ENCODE measurements at regions of chr4 and their contacts with region 1.

Region 1: DNA sequence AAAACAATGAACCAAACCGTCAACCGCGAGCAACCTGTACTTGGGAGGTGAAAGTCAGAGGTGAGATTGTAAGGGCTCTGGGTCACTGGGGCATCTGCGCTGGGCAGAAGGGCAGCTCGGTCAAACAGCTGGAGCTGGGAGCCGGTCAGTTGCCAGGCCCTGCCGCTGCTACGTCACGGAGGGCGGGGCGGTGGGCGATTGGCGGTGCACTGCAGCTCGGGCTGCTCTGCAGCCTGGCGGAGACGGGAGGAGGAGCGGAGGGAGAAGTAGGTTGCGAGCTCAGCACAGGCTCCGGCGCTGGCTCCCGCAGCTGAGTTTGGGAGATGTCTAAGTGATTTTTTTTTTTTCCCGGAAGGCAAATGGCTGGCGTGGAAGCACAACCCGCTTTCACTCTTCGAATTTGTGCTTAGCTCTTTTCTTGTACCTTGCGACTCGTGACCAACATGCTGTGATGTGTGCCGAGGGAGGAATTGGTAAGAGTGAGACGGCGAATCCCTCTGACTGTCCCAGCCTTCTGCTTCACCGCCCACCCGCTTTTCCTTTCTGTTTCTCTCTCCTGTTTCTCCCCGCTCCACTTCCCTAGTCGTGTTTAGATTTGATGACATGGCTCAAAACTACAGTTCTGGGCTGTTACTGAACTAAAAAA is at the start of gene ATP10D:
- DNase-seq: peak; percentile 78 to 85
- ATAC-seq: peak; percentile 92 to 98 (median 95)
- H3K4me3 ChIP-seq: peak within 1 kb of the TSS; percentile 83
- H3K4me3 Mint-ChIP-seq: peak within 1 kb of the TSS; percentile 96
- H3K27ac ChIP-seq: peak within 1 kb of the TSS; percentile 79
- H3K27ac Mint-ChIP-seq: peak within 1 kb of the TSS; percentile 91 to 92
- H3K4me1 ChIP-seq: peaks cover 4% of the 10 kb centered on the region
- H3K4me1 Mint-ChIP-seq: peaks cover 31 to 36% of the 10 kb centered on the region in 2 donors
- H3K27me3 ChIP-seq: no peaks in the 10 kb centered on the region
- H3K27me3 Mint-ChIP-seq: no peaks in the 10 kb centered on the region
- CTCF ChIP-seq: no peak
- total RNA-seq, gene ATP10D: 19.8 to 79.3 (median 28.0) TPM

Region 2: DNA sequence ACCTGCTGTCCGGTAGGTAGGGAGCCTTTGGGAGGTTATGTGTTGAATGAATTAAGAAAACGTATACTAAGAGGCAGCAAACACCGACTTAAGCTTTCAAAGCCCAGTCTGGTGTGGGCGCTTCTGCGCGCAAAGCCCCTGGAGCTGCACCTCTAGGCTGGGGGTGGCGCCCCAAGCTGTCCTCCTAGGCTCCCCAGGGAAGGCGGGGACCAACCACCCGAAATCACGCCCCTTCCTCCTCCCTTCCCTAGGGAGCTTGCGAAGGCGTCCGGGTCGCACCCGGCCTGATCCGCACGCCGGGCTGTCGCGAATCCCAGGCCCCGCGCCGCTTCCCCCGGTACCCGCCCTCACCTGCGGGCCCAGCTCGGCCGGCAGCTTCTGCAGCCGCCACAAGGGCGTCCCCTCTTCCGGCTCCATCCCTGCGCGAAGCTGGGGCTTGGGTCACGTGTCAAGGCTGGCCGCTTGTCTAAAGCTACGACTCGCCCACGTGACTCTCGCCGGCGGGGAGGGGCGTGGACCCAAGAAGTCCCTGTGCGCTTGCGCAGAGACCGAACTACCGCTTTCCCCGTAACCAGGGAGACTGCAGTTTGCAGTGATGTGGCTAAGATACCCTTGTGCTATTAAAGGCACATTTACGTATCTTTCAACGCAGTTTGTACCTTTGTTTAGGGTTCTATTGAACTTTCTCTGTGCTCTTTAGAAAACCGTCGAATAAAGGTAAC is 21.8 kb before region 1 on chr4 and contains the start of gene COMMD8:
- intact Hi-C with region 1: loop called (anchors 1 kb)
- DNase-seq: peak; percentile 96 to 99
- ATAC-seq: peak; percentile 95 to 97 (median 95)
- H3K4me3 ChIP-seq: peak within 1 kb of the TSS; percentile 73
- H3K4me3 Mint-ChIP-seq: peak within 1 kb of the TSS; percentile 63
- H3K27ac ChIP-seq: peak within 1 kb of the TSS; percentile 80
- H3K27ac Mint-ChIP-seq: peak within 1 kb of the TSS; percentile 86 to 92
- H3K4me1 ChIP-seq: peaks cover 9% of the 10 kb centered on the region
- H3K4me1 Mint-ChIP-seq: peaks cover 21 to 40% of the 10 kb centered on the region in 2 donors
- H3K27me3 ChIP-seq: no peaks in the 10 kb centered on the region
- H3K27me3 Mint-ChIP-seq: no peaks in the 10 kb centered on the region
- CTCF ChIP-seq: peak; percentile 22
- total RNA-seq, gene COMMD8: 12.3 to 19.6 (median 13.1) TPM

Region 3: GRCh38 chr4:47474799-47475198 is 10.4 kb before region 1 on chr4:
- intact Hi-C with region 1: no loop called
- DNase-seq: no peak
- ATAC-seq: peak in 1 of 3 donors; percentile 79
- H3K4me3 ChIP-seq: no peak overlapping the region
- H3K4me3 Mint-ChIP-seq: no peak overlapping the region
- H3K27ac ChIP-seq: no peak overlapping the region
- H3K27ac Mint-ChIP-seq: no peak overlapping the region
- H3K4me1 ChIP-seq: no peaks in the 10 kb centered on the region
- H3K4me1 Mint-ChIP-seq: no peaks in the 10 kb centered on the region
- H3K27me3 ChIP-seq: no peaks in the 10 kb centered on the region
- H3K27me3 Mint-ChIP-seq: peaks cover 0 to 3% of the 10 kb centered on the region in 2 donors
- CTCF ChIP-seq: no peak

Region 4: DNA sequence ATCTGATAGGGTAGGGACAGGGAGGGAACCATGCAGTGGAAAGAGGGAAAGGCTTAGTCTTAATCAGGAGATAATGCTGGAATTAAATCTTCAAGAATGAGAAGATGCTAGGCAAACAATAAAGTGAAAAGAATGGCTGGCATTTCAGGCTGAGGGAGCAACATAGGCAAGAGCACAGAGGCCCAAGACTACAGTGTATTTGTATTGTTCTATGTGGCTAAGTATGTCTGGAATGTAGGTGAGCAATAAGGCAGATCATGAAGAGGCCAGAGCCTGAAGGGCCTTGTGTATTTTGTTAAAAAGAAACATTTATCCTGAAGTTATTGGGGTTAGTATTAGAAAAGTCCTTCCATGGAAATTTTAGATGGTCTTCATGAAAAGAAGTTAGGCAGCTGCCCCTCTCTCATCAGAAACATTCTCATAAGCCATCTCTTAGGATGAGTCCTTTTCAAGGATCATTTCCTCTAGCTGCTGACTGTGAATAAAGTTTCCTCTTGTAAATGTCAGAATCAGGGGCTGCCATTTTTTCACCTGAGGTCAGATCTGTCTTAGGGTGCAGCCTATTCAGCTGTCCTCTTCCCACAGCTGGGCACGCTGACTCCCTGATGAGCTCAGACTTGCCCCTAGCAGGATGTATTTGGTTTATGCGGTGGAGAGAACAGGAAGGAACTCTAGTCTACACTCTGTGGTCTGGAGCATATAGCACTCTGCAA is 46.2 kb after region 1 on chr4:
- intact Hi-C with region 1: loop called (anchors 1 kb)
- DNase-seq: peak; percentile 37 to 77
- ATAC-seq: peak; percentile 91 to 98 (median 97)
- H3K4me3 ChIP-seq: no peak overlapping the region
- H3K4me3 Mint-ChIP-seq: peak overlapping the region; percentile 80
- H3K27ac ChIP-seq: peak overlapping the region; percentile 82
- H3K27ac Mint-ChIP-seq: peak overlapping the region; percentile 89
- H3K4me1 ChIP-seq: peaks cover 39% of the 10 kb centered on the region
- H3K4me1 Mint-ChIP-seq: peaks cover 78 to 81% of the 10 kb centered on the region in 2 donors
- H3K27me3 ChIP-seq: no peaks in the 10 kb centered on the region
- H3K27me3 Mint-ChIP-seq: no peaks in the 10 kb centered on the region
- CTCF ChIP-seq: no peak

Region 5: GRCh38 chr4:47704693-47705325 is 219.6 kb after region 1 on chr4:
- intact Hi-C with region 1: no loop called
- DNase-seq: peak in 1 of 2 donors; percentile 32
- ATAC-seq: peak in 1 of 3 donors; percentile 43
- H3K4me3 ChIP-seq: no peak overlapping the region
- H3K4me3 Mint-ChIP-seq: no peak overlapping the region
- H3K27ac ChIP-seq: no peak overlapping the region
- H3K27ac Mint-ChIP-seq: no peak overlapping the region
- H3K4me1 ChIP-seq: no peaks in the 10 kb centered on the region
- H3K4me1 Mint-ChIP-seq: no peaks in the 10 kb centered on the region
- H3K27me3 ChIP-seq: no peaks in the 10 kb centered on the region
- H3K27me3 Mint-ChIP-seq: peaks cover 27 to 63% of the 10 kb centered on the region in 2 donors
- CTCF ChIP-seq: no peak

Region 6: GRCh38 chr4:47926639-47927258 is 441.6 kb after region 1 on chr4:
- intact Hi-C with region 1: no loop called
- DNase-seq: peak; percentile 28 to 71
- ATAC-seq: peak; percentile 88 to 99 (median 98)
- H3K4me3 ChIP-seq: no peak overlapping the region
- H3K4me3 Mint-ChIP-seq: no peak overlapping the region
- H3K27ac ChIP-seq: no peak overlapping the region
- H3K27ac Mint-ChIP-seq: no peak overlapping the region
- H3K4me1 ChIP-seq: peaks cover 6% of the 10 kb centered on the region
- H3K4me1 Mint-ChIP-seq: peaks cover 6% of the 10 kb centered on the region in 2 donors
- H3K27me3 ChIP-seq: peaks cover 2% of the 10 kb centered on the region
- H3K27me3 Mint-ChIP-seq: peaks cover 32 to 53% of the 10 kb centered on the region in 2 donors
- CTCF ChIP-seq: peak; percentile 79

Measured in natural killer cell (primary cell).